ENCODE measurements at regions of chr18 and their contacts with region 1.

Region 1: DNA sequence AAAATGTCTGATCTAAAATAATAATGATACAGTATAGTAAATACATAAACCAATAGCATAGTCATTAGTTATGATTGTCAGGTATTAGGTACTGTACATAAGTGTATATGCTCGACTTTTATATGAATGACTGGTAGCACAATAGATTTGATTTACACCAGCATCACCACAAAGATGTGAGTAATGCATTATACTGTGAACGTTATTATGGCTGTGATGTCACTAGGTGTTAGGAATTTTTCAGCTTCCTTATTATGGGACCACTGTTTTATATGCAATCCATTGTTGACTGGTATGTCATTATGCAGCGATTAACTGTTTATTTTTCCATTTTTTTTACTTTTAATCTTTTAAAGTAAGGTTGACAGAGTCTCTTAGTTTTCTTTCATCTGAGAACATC is 23.7 kb downstream of the ATP9B start:
- DNase-seq: no peak
- H3K4me3 ChIP-seq: no peak overlapping the region
- H3K27ac ChIP-seq: no peak overlapping the region
- H3K4me1 ChIP-seq: peaks cover 10% of the 10 kb centered on the region
- H3K27me3 ChIP-seq: no peaks in the 10 kb centered on the region
- CTCF ChIP-seq: no peak

Region 2: DNA sequence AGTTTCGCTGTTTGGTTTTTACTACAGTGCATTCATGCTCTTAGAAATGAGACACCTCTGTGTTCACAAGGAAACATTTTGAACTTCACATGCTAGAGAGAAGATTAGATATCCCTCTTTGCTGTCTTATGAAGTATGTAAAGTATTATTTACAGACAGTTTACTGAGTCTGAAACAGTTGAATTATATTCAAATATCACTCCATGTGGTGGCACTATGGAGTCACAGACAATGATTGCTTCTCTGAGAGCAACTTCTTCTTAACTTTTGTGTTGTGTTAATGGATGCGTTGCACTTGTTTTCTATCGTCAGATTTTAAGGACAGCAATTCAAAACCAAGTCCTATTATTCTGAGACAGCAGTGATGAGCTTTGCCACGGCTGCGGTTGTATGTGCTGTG is 1019.6 kb before region 1 on chr18:
- intact Hi-C with region 1: no loop called
- DNase-seq: no peak
- H3K4me3 ChIP-seq: no peak overlapping the region
- H3K27ac ChIP-seq: no peak overlapping the region
- H3K4me1 ChIP-seq: no peaks in the 10 kb centered on the region
- H3K27me3 ChIP-seq: peaks cover 37% of the 10 kb centered on the region
- CTCF ChIP-seq: peak; percentile 25

Region 3: DNA sequence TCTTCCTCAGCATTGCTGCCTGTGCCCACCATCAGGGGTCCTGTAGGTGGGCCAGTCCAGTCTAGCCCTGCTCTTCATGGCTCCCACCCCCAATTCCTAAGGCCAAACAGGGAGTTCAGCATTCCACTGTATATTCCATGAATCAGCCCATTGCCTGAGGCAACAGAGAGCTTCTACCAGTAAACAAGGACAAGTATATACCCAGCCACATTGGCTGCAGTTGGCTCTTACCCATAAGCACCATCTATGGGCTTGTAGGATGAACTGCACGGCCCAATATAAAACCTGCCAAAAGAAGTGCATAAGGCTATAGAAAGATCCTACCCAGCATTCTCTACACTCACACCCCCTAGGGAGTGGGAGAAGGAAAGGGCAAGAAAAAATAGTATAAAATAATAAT is 208.4 kb before region 1 on chr18:
- intact Hi-C with region 1: no loop called
- DNase-seq: no peak
- H3K4me3 ChIP-seq: no peak overlapping the region
- H3K27ac ChIP-seq: no peak overlapping the region
- H3K4me1 ChIP-seq: no peaks in the 10 kb centered on the region
- H3K27me3 ChIP-seq: peaks cover 13% of the 10 kb centered on the region
- CTCF ChIP-seq: no peak

Region 4: DNA sequence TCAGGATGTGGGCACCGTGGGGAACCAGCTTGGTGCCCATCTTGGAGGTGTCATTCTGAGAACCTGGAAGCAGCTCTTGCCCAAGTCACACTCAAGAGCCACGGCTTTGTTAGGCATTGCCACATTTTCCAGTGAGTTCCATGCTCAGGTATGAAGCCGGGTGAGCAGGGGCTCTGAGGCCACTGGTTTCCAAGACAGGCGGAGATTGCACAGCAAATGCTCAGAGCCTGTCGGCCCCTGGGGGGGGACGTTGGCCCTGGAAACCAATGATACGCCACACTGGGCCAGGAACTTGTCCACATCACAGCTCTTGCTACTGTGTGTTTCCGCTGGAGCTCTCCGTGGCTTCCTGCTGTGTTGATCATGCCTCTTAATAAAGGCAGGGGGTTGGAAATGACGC is 165.7 kb before region 1 on chr18:
- intact Hi-C with region 1: no loop called
- DNase-seq: no peak
- H3K4me3 ChIP-seq: no peak overlapping the region
- H3K27ac ChIP-seq: no peak overlapping the region
- H3K4me1 ChIP-seq: no peaks in the 10 kb centered on the region
- H3K27me3 ChIP-seq: peaks cover 48% of the 10 kb centered on the region
- CTCF ChIP-seq: no peak

Region 5: GRCh38 chr18:79139206-79139605 is 46.3 kb after region 1 on chr18:
- intact Hi-C with region 1: loop called (anchors 10 kb)
- DNase-seq: no peak
- H3K4me3 ChIP-seq: no peak overlapping the region
- H3K27ac ChIP-seq: no peak overlapping the region
- H3K4me1 ChIP-seq: no peaks in the 10 kb centered on the region
- H3K27me3 ChIP-seq: no peaks in the 10 kb centered on the region
- CTCF ChIP-seq: no peak